ENCODE measurements at regions of chr12 and their contacts with region 1.

Region 1: DNA sequence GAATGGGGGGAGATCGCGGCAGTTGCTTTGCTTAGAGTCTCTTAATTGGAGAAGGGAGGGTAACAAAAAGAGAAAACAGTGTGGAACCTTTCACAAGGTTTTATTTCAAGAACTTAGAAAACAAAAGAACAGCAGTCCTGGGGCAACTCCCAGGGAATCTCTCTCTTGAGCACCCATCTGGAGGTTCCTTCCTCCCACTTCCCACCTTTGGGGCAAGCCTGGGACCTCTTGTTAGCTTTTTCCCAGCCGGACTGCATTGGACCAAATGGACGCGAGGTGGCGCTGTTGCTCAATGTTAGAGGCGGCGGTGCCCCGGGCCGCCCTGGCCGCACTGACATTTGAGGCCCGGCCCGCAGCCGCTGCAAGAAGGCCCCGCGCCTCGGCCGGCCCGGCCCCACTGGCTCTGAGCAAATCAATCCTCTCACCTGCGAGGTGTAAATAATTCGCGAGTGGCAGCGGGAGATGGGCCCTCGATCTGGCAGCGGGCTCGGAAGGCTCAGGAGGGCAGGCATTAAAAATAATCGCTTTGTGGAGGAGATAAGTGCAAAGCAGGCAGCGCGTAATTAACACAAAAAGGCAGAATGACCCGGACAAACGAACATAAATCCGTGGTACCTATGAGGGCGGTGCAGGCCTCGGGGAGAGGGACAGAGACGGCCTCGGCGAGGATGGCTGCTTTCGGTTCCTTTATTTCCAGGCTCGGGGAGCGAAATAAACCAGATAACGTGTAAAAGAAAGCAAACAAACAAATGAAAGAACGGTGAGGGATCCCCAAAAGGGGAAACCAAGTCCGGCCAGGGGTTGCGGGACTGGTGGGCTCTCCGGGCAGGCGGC is 2.7 kb upstream of the HOXC8 start:
- DNase-seq: peak; percentile 87
- H3K4me3 Mint-ChIP-seq: peak overlapping the region; percentile 67
- H3K27ac Mint-ChIP-seq: no peak overlapping the region
- H3K4me1 Mint-ChIP-seq: peaks cover 20% of the 10 kb centered on the region
- H3K27me3 Mint-ChIP-seq: peaks cover 100% of the 10 kb centered on the region

Region 2: DNA sequence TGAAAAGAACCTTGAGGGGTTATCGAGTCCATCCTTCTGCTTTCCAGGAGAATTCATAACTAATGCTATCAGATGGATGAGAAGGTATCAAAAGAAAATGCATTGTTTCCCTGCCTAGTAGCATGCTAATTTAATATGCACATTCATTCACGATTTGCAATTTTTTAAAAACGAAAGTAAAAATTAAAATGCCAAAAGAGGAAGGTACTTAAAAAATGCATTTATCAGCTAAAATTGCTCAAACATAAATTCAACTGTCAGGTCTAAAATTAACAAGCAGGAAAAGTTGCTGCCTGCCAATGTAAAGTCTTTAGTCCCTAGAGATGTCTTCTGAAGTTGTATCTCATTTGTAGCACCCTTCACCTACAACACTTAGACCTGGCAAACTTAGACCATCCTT is 387.8 kb before region 1 on chr12:
- CTCF ChIA-PET with region 1: no interaction called
- DNase-seq: no peak
- H3K4me3 Mint-ChIP-seq: peak overlapping the region; percentile 63
- H3K27ac Mint-ChIP-seq: peak overlapping the region; percentile 78
- H3K4me1 Mint-ChIP-seq: peaks cover 29% of the 10 kb centered on the region
- H3K27me3 Mint-ChIP-seq: no peaks in the 10 kb centered on the region

Region 3: DNA sequence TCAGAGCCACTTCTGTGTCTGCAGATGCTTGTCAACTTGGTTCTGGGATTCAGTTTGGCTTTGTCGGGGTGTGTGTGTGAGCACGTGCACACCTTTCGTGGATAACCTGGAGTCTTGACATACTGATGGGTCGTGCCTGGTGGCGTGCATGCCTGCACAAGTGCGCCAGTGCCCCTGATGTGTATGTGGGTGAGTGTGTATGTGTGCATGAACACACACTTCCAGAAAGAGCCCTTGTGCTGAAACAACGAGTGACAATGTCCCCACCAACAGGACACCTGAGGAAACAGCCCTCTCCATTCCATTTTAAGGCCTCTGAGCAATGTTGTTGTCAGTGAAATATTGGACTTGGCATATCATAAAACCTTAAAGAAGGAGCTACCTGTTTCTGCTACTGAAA is 128.8 kb after region 1 on chr12:
- CTCF ChIA-PET with region 1: no interaction called
- DNase-seq: no peak
- H3K4me3 Mint-ChIP-seq: no peak overlapping the region
- H3K27ac Mint-ChIP-seq: no peak overlapping the region
- H3K4me1 Mint-ChIP-seq: no peaks in the 10 kb centered on the region
- H3K27me3 Mint-ChIP-seq: peaks cover 99% of the 10 kb centered on the region

Region 4: GRCh38 chr12:54154681-54155186 is 148.7 kb after region 1 on chr12:
- CTCF ChIA-PET with region 1: no interaction called
- DNase-seq: no peak
- H3K4me3 Mint-ChIP-seq: no peak overlapping the region
- H3K27ac Mint-ChIP-seq: no peak overlapping the region
- H3K4me1 Mint-ChIP-seq: peaks cover 2% of the 10 kb centered on the region
- H3K27me3 Mint-ChIP-seq: peaks cover 73% of the 10 kb centered on the region

Region 5: DNA sequence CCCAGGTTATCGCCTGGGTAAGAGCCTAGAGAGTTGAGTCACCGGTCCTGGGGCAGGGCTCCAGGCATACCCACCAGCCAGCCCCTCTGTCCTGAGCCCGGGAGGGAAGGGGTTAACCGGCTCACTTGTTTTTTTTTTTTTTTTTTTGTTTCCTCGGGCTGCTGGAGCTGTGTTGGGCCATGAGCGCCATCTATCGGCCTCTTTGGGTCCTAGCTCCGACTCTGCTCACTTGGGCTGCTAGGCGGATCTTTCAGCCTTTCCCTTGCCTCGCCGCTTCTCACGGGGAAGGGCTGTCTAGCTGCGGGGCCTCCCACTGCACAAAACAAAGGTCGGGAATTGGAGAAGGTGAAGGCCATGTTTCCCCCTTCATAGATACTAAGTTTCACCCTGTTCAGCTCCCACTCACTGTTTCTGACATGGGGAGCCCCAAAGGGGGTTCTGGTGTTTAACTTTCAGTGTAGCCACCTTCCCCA is 185.5 kb after region 1 on chr12:
- CTCF ChIA-PET with region 1: interaction called, 13 read pairs
- DNase-seq: peak; percentile 85
- H3K4me3 Mint-ChIP-seq: no peak overlapping the region
- H3K27ac Mint-ChIP-seq: no peak overlapping the region
- H3K4me1 Mint-ChIP-seq: peaks cover 20% of the 10 kb centered on the region
- H3K27me3 Mint-ChIP-seq: peaks cover 66% of the 10 kb centered on the region

Region 6: GRCh38 chr12:54201001-54201794 is 195.1 kb after region 1 on chr12:
- CTCF ChIA-PET with region 1: interaction called, 67 read pairs
- DNase-seq: peak; percentile 77
- H3K4me3 Mint-ChIP-seq: no peak overlapping the region
- H3K27ac Mint-ChIP-seq: no peak overlapping the region
- H3K4me1 Mint-ChIP-seq: no peaks in the 10 kb centered on the region
- H3K27me3 Mint-ChIP-seq: peaks cover 90% of the 10 kb centered on the region

Measured in activated naive CD4-positive, alpha-beta T cell treated with anti-CD3 and anti-CD28 coated beads, Interleukin-2, amount 10 ng/mL, durations not matched to agents 7 days and 5 days (primary cell).